ENCODE measurements at regions of chr13 and their contacts with region 1.

Region 1: DNA sequence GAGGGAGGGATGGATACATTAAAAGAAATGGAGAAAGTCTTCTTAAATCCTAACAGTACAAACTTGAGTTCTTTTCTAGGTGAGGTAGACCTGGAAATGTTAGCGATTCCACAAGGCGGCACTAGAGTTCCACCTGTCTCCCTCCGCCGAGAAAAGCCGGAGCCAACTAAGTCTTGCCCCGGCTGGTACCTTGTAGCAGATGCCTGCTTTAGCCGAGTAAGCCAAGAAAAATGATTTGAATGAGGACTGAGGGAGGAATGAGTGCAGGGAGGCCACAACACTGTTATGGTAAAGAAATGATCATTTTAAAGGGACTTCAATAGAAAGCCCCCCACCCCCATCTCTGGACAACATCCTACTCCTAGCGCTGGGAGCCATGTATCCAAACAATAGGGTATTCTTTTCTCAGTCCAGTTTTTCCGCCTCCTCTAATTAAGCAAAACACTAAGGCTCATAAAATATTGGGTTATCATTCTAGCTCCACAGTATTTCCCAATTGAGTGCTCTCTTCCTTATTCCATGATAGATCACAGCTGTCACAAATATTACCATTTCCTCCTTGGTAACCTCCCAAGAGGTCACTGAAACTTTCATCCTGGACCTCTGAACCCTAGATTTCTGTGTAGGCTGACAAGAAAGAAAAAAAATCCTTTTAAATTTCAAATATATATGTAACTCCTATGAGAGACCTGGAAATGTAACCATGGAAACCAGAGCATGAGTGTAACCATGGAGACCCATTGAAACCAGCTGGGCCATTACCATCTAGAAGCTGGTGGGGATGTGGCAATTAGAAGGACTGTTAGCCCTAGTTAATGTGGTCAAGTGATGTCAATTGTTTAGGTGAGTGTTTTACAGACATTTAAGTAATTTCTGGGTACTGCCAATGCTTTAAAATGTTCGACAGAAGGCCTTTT is 58.3 kb downstream of the GPALPP1 start:
- DNase-seq: peak; percentile 80

Region 2: GRCh38 chr13:45015300-45015699 is 32.4 kb before region 1 on chr13:
- intact Hi-C with region 1: no loop called
- DNase-seq: no peak

Region 3: GRCh38 chr13:45119991-45120864 is 72.6 kb after region 1 on chr13 and contains the start of gene GTF2F2:
- intact Hi-C with region 1: loop called (anchors 2 kb)
- DNase-seq: peak; percentile 96
- total RNA-seq, gene GTF2F2: 20.2 TPM

Region 4: DNA sequence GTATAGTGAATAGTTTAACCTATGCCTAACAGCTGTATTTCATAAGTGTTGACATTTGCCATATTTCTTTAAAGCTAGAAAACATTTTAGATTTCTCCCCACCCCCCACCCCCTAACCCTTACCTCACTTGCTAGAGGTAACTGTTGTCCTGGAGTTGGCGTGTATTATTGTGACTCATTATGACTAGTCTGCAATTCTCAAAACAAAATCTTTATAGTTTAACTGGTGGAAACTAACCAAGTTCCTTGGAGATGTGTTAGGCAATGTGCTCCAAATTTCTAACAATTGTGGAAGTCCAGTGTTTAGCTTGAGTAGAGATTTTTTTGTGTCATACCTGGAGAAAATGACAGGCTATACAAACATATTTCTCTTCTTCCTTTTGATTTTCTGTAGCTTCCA is 115.2 kb after region 1 on chr13:
- intact Hi-C with region 1: no loop called
- DNase-seq: no peak

Region 5: DNA sequence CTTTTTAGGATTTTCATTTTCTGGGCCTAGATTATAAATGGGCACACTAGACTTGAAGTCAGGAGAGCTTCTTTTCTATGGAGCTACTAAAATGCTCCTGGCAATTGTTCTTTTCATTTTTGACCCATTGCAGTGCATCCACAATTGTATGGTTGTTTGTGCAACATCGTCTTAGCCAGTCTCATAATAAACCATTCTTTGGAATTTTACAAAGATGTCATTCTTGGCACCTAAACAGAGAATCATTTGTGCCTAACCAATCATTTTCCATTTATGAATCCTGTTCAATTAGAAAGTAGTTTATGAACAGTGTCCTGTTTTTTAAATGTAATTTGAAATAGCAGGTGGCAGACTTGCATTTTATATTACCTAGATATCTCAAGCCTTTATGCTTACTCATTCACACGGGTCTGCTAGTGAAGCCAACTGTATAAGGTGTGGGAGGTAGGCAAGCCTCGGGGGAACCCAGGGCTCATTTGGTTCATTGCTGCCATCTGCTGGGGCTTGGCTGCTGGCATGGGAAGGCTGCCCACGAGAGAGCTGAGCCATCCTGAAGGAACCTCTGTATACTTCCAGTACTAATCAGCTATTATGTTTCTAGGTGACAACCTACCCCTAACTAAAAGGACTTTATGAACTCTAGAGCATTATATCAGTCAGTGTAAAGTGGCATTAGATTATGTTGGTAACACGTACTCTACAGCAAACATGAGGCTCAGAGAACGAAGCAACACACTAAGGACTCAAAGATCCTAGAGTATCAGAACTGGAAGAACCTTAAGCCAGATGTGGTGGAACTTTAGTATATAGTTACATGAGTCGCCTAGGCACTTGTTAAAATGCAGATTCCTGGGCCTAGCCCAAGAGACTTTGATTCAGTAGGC is 233.3 kb after region 1 on chr13:
- intact Hi-C with region 1: loop called (anchors 2 kb)
- DNase-seq: no peak

Region 6: DNA sequence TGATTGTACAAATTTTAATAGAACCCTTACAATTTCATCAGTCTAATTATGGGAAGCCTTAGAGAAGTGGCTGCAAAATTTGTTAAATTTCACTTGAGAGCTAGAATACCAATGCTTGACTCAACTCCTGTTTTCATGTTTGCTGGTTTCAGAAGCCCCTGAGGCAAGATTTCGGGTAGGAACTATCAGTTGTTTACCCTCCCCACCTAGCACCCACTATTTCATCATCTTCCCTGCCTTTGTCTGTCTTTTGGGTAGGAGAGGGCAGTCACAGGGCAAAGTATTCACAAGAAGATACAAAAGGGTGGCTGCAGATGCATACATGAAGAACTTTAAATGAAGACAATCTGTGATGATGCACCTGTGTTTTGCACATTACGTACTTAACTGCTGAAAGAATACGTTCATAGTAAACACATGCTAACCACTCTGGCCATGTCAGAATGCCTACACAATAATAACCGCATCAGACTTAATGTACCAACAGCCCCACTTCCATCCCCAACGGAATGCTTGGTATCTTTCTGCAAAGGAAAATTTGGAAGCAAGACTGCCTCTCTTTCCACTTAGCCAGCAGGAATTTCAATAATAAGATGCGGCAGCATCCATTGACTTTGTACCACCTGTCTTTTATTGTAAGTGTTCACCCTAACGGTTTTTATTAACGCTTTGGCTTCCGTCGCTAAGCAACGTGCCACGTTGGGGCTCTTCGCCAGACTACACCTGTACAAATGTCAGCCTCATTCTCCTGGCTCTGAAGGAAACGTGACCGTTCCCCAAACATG is 262.9 kb after region 1 on chr13:
- intact Hi-C with region 1: loop called (anchors 2 kb)
- DNase-seq: no peak